Activated CD4-positive, alpha-beta T cell treated with anti-CD3 and anti-CD28 coated beads, Interleukin-2, amount 10 ng/mL, durations not matched to agents 24 days and 14 days (primary cell): ENCODE measurements at regions of chr14 and their contacts with region 1.

Region 1: DNA sequence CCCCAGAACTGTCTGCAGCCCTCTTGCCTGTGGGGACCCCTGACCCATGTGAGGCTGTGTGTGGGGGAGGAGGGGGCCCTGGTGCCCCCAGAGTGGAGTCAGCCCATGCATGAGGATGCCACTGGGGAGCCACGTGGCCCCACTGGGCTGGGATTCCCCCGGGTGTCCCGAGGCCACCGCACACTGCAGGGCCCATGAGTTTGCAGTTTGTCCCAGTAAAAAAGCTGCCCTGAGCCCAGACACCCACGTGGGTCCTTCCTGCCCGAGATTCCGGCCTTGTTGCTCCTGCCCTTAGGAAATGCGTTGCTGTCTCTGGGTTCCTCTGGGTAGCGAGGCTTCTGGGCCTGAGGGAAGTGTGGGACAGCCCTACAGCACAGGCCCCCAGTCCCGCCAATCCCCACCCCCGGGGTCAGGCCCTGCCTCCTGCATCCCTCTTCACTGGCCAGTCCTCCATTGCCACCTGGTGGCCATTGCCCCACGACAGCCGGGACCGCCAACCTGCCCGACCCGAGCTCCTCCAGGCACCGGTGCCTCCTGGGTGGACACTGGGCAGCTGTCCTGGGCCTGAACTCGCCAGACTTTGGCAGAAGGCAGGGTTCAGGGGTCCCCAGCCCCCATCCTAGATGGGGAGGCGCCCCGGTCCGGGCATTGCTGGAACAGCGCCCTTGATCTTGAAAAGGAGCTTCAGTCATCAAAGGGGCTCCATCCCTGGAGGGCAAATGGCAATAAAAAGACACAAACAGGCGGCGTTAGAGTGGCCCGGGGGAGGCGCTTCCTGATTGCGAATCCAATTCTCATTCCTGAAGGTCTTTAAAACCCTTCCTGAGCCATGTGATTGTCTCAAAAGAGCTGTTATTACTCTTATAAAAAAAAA is 15.6 kb upstream of the C14orf180 start:
- DNase-seq: peak; percentile 88
- H3K4me3 Mint-ChIP-seq: no peak overlapping the region
- H3K27ac Mint-ChIP-seq: no peak overlapping the region
- H3K4me1 Mint-ChIP-seq: no peaks in the 10 kb centered on the region
- H3K27me3 Mint-ChIP-seq: peaks cover 2% of the 10 kb centered on the region

Region 2: GRCh38 chr14:104078031-104078455 is 485.9 kb before region 1 on chr14:
- intact Hi-C with region 1: loop called (anchors 2 kb)
- DNase-seq: peak; percentile 95
- H3K4me3 Mint-ChIP-seq: peak overlapping the region; percentile 12
- H3K27ac Mint-ChIP-seq: no peak overlapping the region
- H3K4me1 Mint-ChIP-seq: peaks cover 13% of the 10 kb centered on the region
- H3K27me3 Mint-ChIP-seq: peaks cover 7% of the 10 kb centered on the region

Region 3: DNA sequence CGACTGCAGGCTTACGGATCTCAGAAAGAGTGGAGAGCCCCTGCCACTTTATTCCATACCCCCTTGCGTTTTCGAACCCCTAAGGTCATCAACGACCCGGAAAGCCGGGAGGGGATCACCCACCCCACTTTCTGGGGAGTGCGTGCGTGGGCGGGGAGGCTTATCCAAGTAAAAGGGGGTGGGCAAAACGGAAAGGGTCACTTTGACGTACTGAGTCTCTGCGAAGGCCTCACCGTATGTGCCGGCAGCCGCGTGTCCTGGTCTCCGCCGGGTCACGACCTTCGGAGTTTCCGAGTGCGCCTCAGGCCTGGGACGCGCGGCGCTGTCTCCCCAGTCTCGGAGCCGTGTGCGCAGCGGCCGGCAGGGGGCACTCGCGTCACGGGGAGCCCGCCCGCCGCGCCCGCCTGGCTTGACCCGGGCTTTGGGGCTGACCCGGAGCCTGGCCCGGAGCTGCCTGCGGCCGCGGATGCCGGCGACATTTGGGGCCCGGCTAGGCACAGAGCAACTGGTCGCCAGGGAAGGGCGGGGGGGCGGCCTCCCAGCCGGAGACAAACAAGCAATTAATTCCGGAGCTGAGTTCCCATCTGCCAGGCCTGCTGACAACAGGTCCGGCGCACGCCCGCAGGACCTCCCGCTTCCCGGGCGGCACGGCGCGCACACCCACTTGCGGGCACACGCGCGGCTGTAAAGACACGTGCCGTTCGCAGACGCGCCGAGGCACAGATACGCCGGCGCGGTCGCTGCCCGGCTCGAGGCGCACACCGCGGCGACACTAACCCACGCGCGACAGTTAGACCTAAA is 426.5 kb before region 1 on chr14:
- intact Hi-C with region 1: loop called (anchors 5 kb)
- DNase-seq: peak; percentile 90
- H3K4me3 Mint-ChIP-seq: peak overlapping the region; percentile 49
- H3K27ac Mint-ChIP-seq: no peak overlapping the region
- H3K4me1 Mint-ChIP-seq: peaks cover 4% of the 10 kb centered on the region
- H3K27me3 Mint-ChIP-seq: peaks cover 34% of the 10 kb centered on the region

Region 4: GRCh38 chr14:104267895-104268294 is 296.1 kb before region 1 on chr14:
- intact Hi-C with region 1: no loop called
- DNase-seq: no peak
- H3K4me3 Mint-ChIP-seq: no peak overlapping the region
- H3K27ac Mint-ChIP-seq: no peak overlapping the region
- H3K4me1 Mint-ChIP-seq: no peaks in the 10 kb centered on the region
- H3K27me3 Mint-ChIP-seq: no peaks in the 10 kb centered on the region

Region 5: DNA sequence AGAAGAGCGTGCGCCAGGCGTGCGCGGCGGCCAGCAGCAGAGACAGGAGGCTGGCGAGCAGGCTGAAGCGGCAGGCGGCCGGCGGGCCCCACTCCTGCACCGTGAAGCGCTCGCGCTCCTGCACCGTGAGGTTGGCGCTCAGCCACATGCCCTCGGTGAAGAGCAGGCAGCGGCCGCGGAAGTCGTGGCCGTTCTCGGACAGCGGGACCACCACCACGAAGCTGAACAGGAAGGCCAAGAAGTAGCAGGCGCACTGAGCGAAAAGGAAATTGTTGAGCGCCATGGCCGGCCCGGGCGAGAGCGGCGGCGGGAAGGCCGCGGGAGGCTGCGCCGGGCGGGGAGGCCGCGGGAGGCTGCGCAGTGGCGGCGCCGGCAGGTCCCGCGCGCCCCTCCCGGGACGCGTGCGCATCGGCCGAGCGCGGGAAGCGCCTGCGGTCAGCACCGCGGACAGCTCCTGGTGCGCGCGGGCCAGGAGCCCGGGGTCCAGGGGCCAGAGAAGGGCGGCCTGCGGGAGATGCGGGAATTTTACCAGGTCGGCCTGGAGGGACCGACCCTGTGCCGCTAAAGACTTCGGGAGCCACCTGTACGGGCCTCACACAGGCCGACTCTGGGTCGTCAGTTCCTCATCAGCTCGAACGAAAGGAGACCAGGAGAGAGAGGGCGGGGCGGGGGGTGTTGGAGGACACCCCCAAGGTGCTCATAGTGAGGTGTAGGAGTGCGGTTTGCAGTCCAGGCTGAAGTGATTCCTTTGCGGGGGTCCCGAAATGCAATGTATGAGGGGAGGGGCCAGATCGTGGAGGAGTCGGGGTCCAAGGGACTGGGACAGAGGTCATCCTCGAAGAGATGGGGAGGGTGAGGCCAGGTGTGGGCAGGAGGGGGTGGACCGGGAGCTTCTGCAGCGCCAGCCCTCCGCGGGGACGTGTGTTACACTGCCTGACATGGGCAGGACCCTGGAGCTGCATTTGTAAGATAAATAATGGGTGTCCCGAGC is 40.8 kb after region 1 on chr14 and contains the start of gene TMEM179:
- intact Hi-C with region 1: no loop called
- DNase-seq: peak; percentile 65
- H3K4me3 Mint-ChIP-seq: peak within 1 kb of the TSS; percentile 23
- H3K27ac Mint-ChIP-seq: no peak within 1 kb of the TSS
- H3K4me1 Mint-ChIP-seq: no peaks in the 10 kb centered on the region
- H3K27me3 Mint-ChIP-seq: peaks cover 29% of the 10 kb centered on the region
- total RNA-seq, gene TMEM179: 0.28 TPM in 1 of 2 replicates, not detected in the other